Posterior vena cava (tissue), 2 donors: ENCODE measurements at regions of chr1 and their contacts with region 1.

Region 1: GRCh38 chr1:84823511-84823910 is 69.5 kb downstream of the LPAR3 start:
- DNase-seq: no peak

Region 2: GRCh38 chr1:84800090-84801073 is 23.1 kb before region 1 on chr1:
- intact Hi-C with region 1: no loop called
- DNase-seq: no peak

Region 3: GRCh38 chr1:85464497-85465098 is 641.1 kb after region 1 on chr1:
- intact Hi-C with region 1: no loop called
- DNase-seq: peak; percentile 91

Region 4: GRCh38 chr1:86035101-86035500 is 1211.6 kb after region 1 on chr1:
- intact Hi-C with region 1: loop called in 1 of 2 experiments (anchors 5 kb)
- DNase-seq: no peak